ENCODE measurements at regions of chr3 and their contacts with region 1.

Region 1: DNA sequence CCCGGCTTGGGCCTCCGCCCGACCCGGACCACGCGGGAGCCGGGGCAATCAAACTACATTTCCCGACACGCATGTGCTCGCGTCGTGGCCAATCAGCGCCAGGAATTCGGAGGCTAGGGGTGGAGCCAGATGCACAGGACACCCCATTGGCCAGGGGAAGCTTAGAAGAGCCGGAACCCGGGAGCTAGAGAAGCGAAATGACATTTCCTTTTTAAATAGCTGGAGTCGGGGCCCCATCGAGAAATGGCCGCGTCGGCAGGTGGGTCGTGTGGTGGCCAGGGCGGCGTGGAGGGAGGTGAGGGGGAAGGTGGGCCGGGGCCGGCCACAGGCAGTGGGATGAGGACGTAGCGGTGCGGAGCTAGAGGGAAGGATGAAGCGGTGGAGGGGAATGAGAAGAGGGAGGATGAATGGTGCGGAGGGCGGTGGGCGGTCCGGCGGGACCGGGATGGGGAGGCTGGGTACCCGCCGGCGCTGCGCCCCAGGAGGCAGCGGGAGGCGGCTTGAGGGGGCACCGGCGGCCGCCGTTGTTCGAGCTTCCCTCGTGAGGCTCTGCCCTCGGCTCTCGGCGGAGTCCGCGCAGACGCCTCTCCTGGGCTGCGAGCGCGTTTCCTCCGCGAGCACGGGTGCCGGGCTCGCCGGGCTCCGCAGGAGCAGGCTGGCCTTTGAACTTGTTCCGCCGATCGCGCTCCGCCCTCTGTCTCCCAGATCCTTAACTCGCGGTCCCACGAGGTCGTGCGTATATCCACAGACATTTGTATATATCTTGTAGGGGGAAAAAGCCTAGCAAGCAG is at the start of gene KBTBD8:
- DNase-seq: peak; percentile 7 to 99 (median 95)
- ATAC-seq: peak; percentile 94
- H3K4me3 ChIP-seq: peak within 1 kb of the TSS; percentile 73
- H3K4me3 Mint-ChIP-seq: peak within 1 kb of the TSS; percentile 98
- H3K27ac ChIP-seq: peak within 1 kb of the TSS; percentile 53 to 67
- H3K27ac Mint-ChIP-seq: peak within 1 kb of the TSS; percentile 89
- H3K4me1 ChIP-seq: peaks cover 16% of the 10 kb centered on the region
- H3K4me1 Mint-ChIP-seq: peaks cover 39% of the 10 kb centered on the region
- H3K27me3 ChIP-seq: peaks cover 0 to 18% of the 10 kb centered on the region in 2 experiments
- H3K27me3 Mint-ChIP-seq: peaks cover 34% of the 10 kb centered on the region
- CTCF ChIP-seq: no peak
- total RNA-seq, gene KBTBD8: 7.1 to 7.7 TPM

Region 2: DNA sequence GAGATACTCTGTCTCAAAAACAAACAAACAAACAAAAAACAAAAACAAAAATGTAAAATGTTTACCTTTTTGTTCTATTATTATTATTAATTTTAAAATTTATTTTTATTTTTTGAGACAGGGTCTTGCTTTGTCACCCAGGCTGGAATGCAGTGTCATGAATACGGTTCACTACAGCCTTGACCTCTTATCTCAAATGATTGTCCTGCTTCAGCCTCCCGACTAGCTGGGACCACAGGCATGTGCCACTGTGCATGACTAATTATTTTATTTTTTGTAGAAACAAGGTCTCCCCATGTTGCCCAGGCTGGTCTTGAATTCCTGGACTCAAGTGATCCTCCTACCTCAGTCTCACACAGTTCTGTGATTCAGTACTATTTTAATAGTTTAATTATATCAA is 783.2 kb before region 1 on chr3:
- CTCF ChIA-PET with region 1: no interaction called
- POLR2A ChIA-PET with region 1: no interaction called
- intact Hi-C with region 1: loop called in 1 of 2 experiments (anchors 5 kb)
- DNase-seq: no peak
- ATAC-seq: no peak
- H3K4me3 ChIP-seq: no peak overlapping the region
- H3K4me3 Mint-ChIP-seq: no peak overlapping the region
- H3K27ac ChIP-seq: no peak overlapping the region
- H3K27ac Mint-ChIP-seq: no peak overlapping the region
- H3K4me1 ChIP-seq: peaks cover 3% of the 10 kb centered on the region
- H3K4me1 Mint-ChIP-seq: peaks cover 9% of the 10 kb centered on the region
- H3K27me3 ChIP-seq: no peaks in the 10 kb centered on the region
- H3K27me3 Mint-ChIP-seq: peaks cover 4% of the 10 kb centered on the region
- CTCF ChIP-seq: no peak

Region 3: DNA sequence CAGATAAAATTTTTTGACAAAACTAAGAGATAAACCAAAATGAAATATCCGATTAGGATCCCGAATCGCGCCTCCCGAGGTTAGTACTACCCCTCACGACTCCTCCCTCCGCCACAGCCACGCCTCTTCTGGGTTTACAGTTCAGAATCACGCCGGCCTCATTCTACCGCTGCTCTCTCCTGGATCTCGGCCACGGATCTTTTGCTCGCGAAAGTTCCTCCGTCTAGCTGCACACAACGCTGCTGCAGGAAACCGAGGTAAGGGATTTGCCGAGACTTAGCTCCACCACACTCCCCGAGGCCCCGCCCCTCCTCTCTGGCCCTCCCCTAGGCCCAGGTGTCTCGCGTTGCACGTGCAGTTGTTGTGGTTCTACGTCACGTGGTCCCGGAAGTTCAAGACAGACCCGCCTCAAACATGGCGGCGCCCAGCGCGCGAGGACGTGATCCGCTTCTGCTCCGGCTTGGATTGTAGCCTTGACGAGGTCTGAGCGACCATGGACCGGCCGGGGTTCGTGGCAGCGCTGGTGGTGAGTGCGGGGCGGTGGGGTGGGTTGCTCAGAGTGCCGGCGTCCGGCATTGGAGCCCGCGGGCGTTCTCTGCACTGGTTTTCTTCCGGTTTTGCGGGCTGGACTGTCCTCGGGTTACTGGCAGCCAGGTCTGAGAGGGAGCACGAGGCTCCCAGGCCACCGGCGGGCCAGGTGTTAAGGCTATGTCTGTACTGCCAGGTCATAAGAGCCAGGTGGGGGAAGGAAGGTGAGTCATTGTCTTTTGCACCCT is 777.5 kb before region 1 on chr3 and contains the start of gene SLC25A26:
- CTCF ChIA-PET with region 1: no interaction called
- POLR2A ChIA-PET with region 1: interaction called, 13 read pairs
- intact Hi-C with region 1: loop called in 1 of 2 experiments (anchors 5 kb)
- DNase-seq: peak; percentile 94 to 99 (median 97)
- ATAC-seq: peak; percentile 97
- H3K4me3 ChIP-seq: peak within 1 kb of the TSS; percentile 79
- H3K4me3 Mint-ChIP-seq: peak within 1 kb of the TSS; percentile 85
- H3K27ac ChIP-seq: peak within 1 kb of the TSS; percentile 40 to 81
- H3K27ac Mint-ChIP-seq: peak within 1 kb of the TSS; percentile 64
- H3K4me1 ChIP-seq: peaks cover 10% of the 10 kb centered on the region
- H3K4me1 Mint-ChIP-seq: peaks cover 43% of the 10 kb centered on the region
- H3K27me3 ChIP-seq: no peaks in the 10 kb centered on the region
- H3K27me3 Mint-ChIP-seq: peaks cover 2% of the 10 kb centered on the region
- CTCF ChIP-seq: no peak
- total RNA-seq, gene SLC25A26: 26.9 to 30.2 TPM

Region 4: DNA sequence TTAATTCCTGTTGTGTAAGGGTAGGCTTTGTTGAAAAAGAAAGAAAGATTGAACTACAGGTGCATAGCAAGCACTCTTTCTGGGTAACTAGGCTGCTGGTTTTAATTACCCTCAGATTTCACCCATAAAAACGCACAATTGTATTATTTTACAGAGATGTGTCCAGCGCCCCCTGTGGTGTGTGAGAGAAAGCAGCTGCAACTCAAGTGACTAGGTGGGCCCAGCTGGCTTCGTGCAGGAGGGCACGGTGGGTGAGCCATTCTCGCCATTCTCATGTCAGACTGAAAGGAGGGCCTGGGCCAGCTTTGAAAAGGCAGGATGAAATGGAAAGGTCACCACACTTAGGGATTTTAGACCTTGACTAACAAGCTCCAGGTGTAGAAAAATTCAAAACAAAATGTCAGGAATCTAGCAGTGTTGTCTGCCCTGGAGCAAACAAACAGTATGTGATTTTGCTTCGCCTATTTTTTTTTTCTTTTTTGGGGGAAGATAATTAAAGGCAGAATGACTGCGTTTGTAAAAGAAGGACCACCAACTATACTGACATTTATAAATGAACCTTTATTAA is 620.0 kb before region 1 on chr3:
- CTCF ChIA-PET with region 1: no interaction called
- POLR2A ChIA-PET with region 1: no interaction called
- intact Hi-C with region 1: loop called in 1 of 2 experiments (anchors 5 kb)
- DNase-seq: peak in 13 of 14 experiments; percentile 19 to 75 (median 39)
- ATAC-seq: peak; percentile 72
- H3K4me3 ChIP-seq: no peak overlapping the region
- H3K4me3 Mint-ChIP-seq: no peak overlapping the region
- H3K27ac ChIP-seq: peak overlapping the region in 1 of 2 donors; percentile 70
- H3K27ac Mint-ChIP-seq: peak overlapping the region; percentile 85
- H3K4me1 ChIP-seq: peaks cover 14% of the 10 kb centered on the region
- H3K4me1 Mint-ChIP-seq: peaks cover 18% of the 10 kb centered on the region
- H3K27me3 ChIP-seq: no peaks in the 10 kb centered on the region
- H3K27me3 Mint-ChIP-seq: no peaks in the 10 kb centered on the region
- CTCF ChIP-seq: peak; percentile 55

Region 5: GRCh38 chr3:67947808-67948508 is 949.6 kb after region 1 on chr3:
- CTCF ChIA-PET with region 1: no interaction called
- POLR2A ChIA-PET with region 1: no interaction called
- intact Hi-C with region 1: loop called in 1 of 2 experiments (anchors 5 kb)
- DNase-seq: peak; percentile 52 to 89 (median 67)
- ATAC-seq: peak; percentile 95
- H3K4me3 ChIP-seq: peak overlapping the region; percentile 49
- H3K4me3 Mint-ChIP-seq: peak overlapping the region; percentile 86
- H3K27ac ChIP-seq: no peak overlapping the region
- H3K27ac Mint-ChIP-seq: peak overlapping the region; percentile 87
- H3K4me1 ChIP-seq: peaks cover 16% of the 10 kb centered on the region
- H3K4me1 Mint-ChIP-seq: peaks cover 47% of the 10 kb centered on the region
- H3K27me3 ChIP-seq: no peaks in the 10 kb centered on the region
- H3K27me3 Mint-ChIP-seq: no peaks in the 10 kb centered on the region
- CTCF ChIP-seq: peak; percentile 24

Measured in CD4-positive, alpha-beta T cell (primary cell).